IMR-90 (cell line): ENCODE measurements at regions of chr22 and their contacts with region 1.

Region 1: GRCh38 chr22:40922484-40923303 is 28.5 kb upstream of the RBX1 start:
- DNase-seq: peak; percentile 72
- ATAC-seq: peak; percentile 92
- H3K4me3 ChIP-seq: no peak overlapping the region
- H3K27ac ChIP-seq: no peak overlapping the region
- H3K4me1 ChIP-seq: peaks cover 1% of the 10 kb centered on the region
- H3K27me3 ChIP-seq: no peaks in the 10 kb centered on the region
- CTCF ChIP-seq: peak; percentile 71
- POLR2A ChIP-seq: no peak
- RAD21 ChIP-seq: peak; percentile 82

Region 2: DNA sequence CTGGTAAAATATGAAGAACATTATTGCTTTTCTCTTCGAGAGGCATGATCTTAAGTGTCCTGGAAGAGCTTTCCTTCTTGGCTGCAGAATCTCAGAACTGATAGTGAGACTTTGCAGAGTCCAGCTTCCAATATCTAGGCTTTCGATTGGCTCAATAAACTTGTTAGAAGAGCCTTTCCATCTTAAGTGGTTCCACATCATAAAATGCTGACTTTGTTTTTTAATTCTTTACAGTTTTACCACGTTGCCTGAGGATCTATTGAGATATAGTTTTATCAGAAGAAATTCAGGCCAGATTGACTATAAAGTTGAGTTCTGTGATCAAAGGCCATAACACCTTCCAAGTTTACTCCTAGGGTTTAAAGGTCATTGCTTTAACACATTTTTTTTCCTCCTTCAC is 45.2 kb before region 1 on chr22:
- CTCF ChIA-PET with region 1: no interaction called
- POLR2A ChIA-PET with region 1: no interaction called
- dilution Hi-C with region 1: no loop called
- in situ Hi-C with region 1: no loop called
- intact Hi-C with region 1: no loop called
- DNase-seq: no peak
- ATAC-seq: no peak
- H3K4me3 ChIP-seq: no peak overlapping the region
- H3K27ac ChIP-seq: no peak overlapping the region
- H3K4me1 ChIP-seq: no peaks in the 10 kb centered on the region
- H3K27me3 ChIP-seq: no peaks in the 10 kb centered on the region
- CTCF ChIP-seq: no peak
- POLR2A ChIP-seq: no peak
- RAD21 ChIP-seq: no peak

Region 3: DNA sequence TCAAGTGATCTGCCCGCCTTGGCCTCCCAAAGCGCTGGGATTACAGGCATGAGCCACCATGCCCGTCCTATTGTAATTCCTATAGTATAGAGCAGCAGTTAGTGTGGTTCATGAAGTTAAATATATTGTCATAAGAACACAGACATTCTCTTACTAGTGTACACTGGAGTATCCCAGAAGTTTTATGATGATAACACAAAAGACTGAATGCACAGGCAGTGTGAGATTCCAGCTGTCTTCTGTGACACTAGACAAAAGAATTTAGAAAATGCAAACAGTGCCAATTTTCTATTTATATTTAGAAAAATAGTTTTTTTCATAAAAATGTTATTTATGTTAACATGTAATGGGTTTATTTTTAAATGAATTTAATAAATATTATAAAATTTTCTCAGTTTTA is 10.9 kb before region 1 on chr22:
- CTCF ChIA-PET with region 1: interaction called, 11 read pairs
- POLR2A ChIA-PET with region 1: no interaction called
- dilution Hi-C with region 1: no loop called
- in situ Hi-C with region 1: no loop called
- intact Hi-C with region 1: no loop called
- DNase-seq: peak; percentile 50
- ATAC-seq: peak; percentile 90
- H3K4me3 ChIP-seq: no peak overlapping the region
- H3K27ac ChIP-seq: peak overlapping the region; percentile 89; the same call in 1 of the 2 replicates
- H3K4me1 ChIP-seq: peaks cover 5% of the 10 kb centered on the region
- H3K27me3 ChIP-seq: no peaks in the 10 kb centered on the region
- CTCF ChIP-seq: no peak
- POLR2A ChIP-seq: no peak
- RAD21 ChIP-seq: no peak

Region 4: DNA sequence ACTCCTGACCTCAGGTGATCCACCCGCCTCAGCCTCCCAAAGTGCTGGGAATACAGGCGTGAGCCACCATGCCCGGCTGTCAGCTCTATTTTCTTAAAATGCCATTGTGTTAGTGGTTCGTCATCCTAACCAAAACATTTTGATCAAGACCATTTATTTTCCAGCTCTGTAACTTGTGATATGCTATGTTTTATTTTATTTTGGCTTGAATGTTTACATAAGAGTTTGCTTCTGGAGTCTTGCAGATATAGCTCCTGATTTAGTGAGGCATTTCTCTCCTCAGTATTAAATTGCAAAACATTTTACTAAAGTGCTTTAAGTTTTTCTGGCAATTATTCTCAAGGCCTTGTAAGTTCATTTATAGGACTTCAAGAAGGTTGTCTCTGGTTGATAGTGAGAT is 174.1 kb after region 1 on chr22:
- CTCF ChIA-PET with region 1: no interaction called
- POLR2A ChIA-PET with region 1: no interaction called
- dilution Hi-C with region 1: no loop called
- in situ Hi-C with region 1: no loop called
- intact Hi-C with region 1: loop called (anchors 2 kb)
- DNase-seq: peak; percentile 33
- ATAC-seq: no peak; the same call in 1 of the 2 replicates
- H3K4me3 ChIP-seq: no peak overlapping the region
- H3K27ac ChIP-seq: no peak overlapping the region; the same call in 1 of the 2 replicates
- H3K4me1 ChIP-seq: peaks cover 6% of the 10 kb centered on the region
- H3K27me3 ChIP-seq: no peaks in the 10 kb centered on the region
- CTCF ChIP-seq: no peak
- POLR2A ChIP-seq: no peak
- RAD21 ChIP-seq: no peak

Region 5: GRCh38 chr22:41127451-41127850 is 204.8 kb after region 1 on chr22:
- CTCF ChIA-PET with region 1: no interaction called
- POLR2A ChIA-PET with region 1: no interaction called
- dilution Hi-C with region 1: no loop called
- in situ Hi-C with region 1: no loop called
- intact Hi-C with region 1: loop called (anchors 10 kb)
- DNase-seq: no peak
- ATAC-seq: no peak
- H3K4me3 ChIP-seq: no peak overlapping the region
- H3K27ac ChIP-seq: no peak overlapping the region
- H3K4me1 ChIP-seq: no peaks in the 10 kb centered on the region; the same call in 1 of the 2 replicates
- H3K27me3 ChIP-seq: no peaks in the 10 kb centered on the region
- CTCF ChIP-seq: no peak
- POLR2A ChIP-seq: no peak
- RAD21 ChIP-seq: no peak

Region 6: GRCh38 chr22:41256254-41256897 is 333.7 kb after region 1 on chr22:
- CTCF ChIA-PET with region 1: no interaction called
- POLR2A ChIA-PET with region 1: no interaction called
- dilution Hi-C with region 1: no loop called
- in situ Hi-C with region 1: no loop called
- intact Hi-C with region 1: loop called (anchors 5 kb)
- DNase-seq: peak; percentile 80
- ATAC-seq: peak; percentile 77
- H3K4me3 ChIP-seq: no peak overlapping the region
- H3K27ac ChIP-seq: peak overlapping the region; percentile 6; the same call in 1 of the 2 replicates
- H3K4me1 ChIP-seq: peaks cover 14% of the 10 kb centered on the region
- H3K27me3 ChIP-seq: no peaks in the 10 kb centered on the region
- CTCF ChIP-seq: peak; percentile 31
- POLR2A ChIP-seq: no peak
- RAD21 ChIP-seq: peak; percentile 20; the same call in 1 of the 2 replicates